Natural killer cell (primary cell): ENCODE measurements at regions of chr4 and their contacts with region 1.

Region 1: DNA sequence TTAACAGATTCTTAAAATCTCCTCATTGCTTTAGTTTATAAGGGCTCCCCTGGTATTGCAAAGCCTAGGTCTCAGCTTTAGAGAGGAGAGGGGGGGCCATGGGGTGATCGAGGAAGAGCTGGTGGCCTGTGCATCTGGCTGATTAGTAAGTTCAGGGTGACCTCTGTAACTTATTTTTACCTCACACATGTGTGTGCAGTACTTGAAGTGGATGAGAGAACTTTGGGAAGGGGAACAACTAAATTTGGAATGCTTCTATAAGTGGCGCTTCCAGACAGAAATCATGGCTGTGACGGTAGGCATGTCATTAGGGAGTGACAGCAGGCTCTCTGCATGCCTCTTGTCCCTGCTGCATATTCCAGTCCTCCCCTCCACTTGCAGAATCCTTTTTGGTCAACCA is 41.9 kb downstream of the FRAS1 start:
- DNase-seq: no peak
- ATAC-seq: no peak
- H3K4me3 ChIP-seq: no peak overlapping the region
- H3K4me3 Mint-ChIP-seq: no peak overlapping the region
- H3K27ac ChIP-seq: no peak overlapping the region
- H3K27ac Mint-ChIP-seq: no peak overlapping the region
- H3K4me1 ChIP-seq: no peaks in the 10 kb centered on the region
- H3K4me1 Mint-ChIP-seq: no peaks in the 10 kb centered on the region
- H3K27me3 ChIP-seq: no peaks in the 10 kb centered on the region
- H3K27me3 Mint-ChIP-seq: no peaks in the 10 kb centered on the region
- CTCF ChIP-seq: no peak

Region 2: DNA sequence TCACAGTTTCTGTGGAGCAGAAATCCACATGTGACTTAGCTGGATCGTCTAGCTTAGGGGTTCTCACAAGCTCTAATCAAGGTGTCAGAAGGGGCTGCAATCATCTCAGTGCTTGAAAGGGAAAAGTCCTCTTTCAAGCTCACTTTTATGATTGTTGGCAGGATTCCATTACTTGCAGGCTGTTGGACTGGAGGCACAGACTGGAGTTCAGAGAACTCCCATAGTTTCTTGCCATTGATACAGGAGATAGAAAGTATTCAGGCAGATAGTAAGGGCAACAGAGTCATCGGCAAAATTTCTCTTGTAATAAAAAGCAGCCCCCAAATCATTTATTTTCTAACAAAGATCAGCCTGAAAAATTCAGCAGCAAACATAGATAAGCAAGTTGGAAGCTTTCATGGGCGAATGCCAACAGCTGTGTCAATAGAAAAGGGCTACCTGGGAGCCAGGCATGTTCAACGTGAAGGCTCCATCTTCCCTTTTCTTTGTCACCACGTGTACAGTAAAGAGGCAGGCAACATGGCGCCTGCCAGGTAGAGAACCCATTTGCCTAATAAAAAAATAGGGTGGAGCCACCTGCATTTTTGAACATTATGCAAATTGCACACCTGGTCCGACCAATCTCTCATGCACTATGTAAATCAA is 429.0 kb before region 1 on chr4:
- intact Hi-C with region 1: no loop called
- DNase-seq: no peak
- ATAC-seq: no peak
- H3K4me3 ChIP-seq: no peak overlapping the region
- H3K4me3 Mint-ChIP-seq: no peak overlapping the region
- H3K27ac ChIP-seq: no peak overlapping the region
- H3K27ac Mint-ChIP-seq: no peak overlapping the region
- H3K4me1 ChIP-seq: no peaks in the 10 kb centered on the region
- H3K4me1 Mint-ChIP-seq: no peaks in the 10 kb centered on the region
- H3K27me3 ChIP-seq: no peaks in the 10 kb centered on the region
- H3K27me3 Mint-ChIP-seq: no peaks in the 10 kb centered on the region
- CTCF ChIP-seq: no peak

Region 3: GRCh38 chr4:78121338-78121904 is 22.4 kb after region 1 on chr4:
- intact Hi-C with region 1: loop called (anchors 2 kb)
- DNase-seq: no peak
- ATAC-seq: no peak
- H3K4me3 ChIP-seq: no peak overlapping the region
- H3K4me3 Mint-ChIP-seq: no peak overlapping the region
- H3K27ac ChIP-seq: no peak overlapping the region
- H3K27ac Mint-ChIP-seq: no peak overlapping the region
- H3K4me1 ChIP-seq: no peaks in the 10 kb centered on the region
- H3K4me1 Mint-ChIP-seq: no peaks in the 10 kb centered on the region
- H3K27me3 ChIP-seq: no peaks in the 10 kb centered on the region
- H3K27me3 Mint-ChIP-seq: peaks cover 9 to 17% of the 10 kb centered on the region in 2 donors
- CTCF ChIP-seq: no peak